ENCODE measurements at regions of chr6 and their contacts with region 1.

Region 1: GRCh38 chr6:73732845-73733675 is 37.1 kb downstream of the CD109 start:
- DNase-seq: peak; percentile 80

Region 2: GRCh38 chr6:73675466-73676098 is 57.5 kb before region 1 on chr6:
- CTCF ChIA-PET with region 1: interaction called, 27 read pairs
- POLR2A ChIA-PET with region 1: no interaction called
- DNase-seq: peak; percentile 80